Ascending aorta (tissue), 2 donors: ENCODE measurements at regions of chr3 and their contacts with region 1.

Region 1: GRCh38 chr3:150763122-150763841 is at the start of gene SIAH2:
- DNase-seq: peak; percentile 82 to 96
- H3K4me3 ChIP-seq: peak within 1 kb of the TSS; percentile 81 to 94
- H3K27ac ChIP-seq: peak within 1 kb of the TSS; percentile 92 to 97
- H3K4me1 ChIP-seq: peaks cover 0 to 23% of the 10 kb centered on the region in 2 donors
- H3K27me3 ChIP-seq: no peaks in the 10 kb centered on the region
- CTCF ChIP-seq: no peak
- total RNA-seq, gene SIAH2: 50.9 TPM

Region 2: GRCh38 chr3:150546226-150547044 is 216.8 kb before region 1 on chr3 and contains the starts of genes EIF2A and SERP1:
- intact Hi-C with region 1: loop called (anchors 1 kb)
- DNase-seq: peak; percentile 94 to 99
- H3K4me3 ChIP-seq: peak within 1 kb of the TSS; percentile 89 to 99
- H3K27ac ChIP-seq: peak within 1 kb of the TSS; percentile 99 to 100
- H3K4me1 ChIP-seq: peaks cover 0 to 24% of the 10 kb centered on the region in 2 donors
- H3K27me3 ChIP-seq: no peaks in the 10 kb centered on the region
- CTCF ChIP-seq: no peak
- total RNA-seq, gene EIF2A: 83.2 TPM
- total RNA-seq, gene SERP1: 237 TPM

Region 3: GRCh38 chr3:150603153-150603979 is 159.9 kb before region 1 on chr3 and contains the start of gene SELENOT:
- intact Hi-C with region 1: loop called (anchors 2 kb)
- DNase-seq: peak; percentile 84 to 97
- H3K4me3 ChIP-seq: peak within 1 kb of the TSS; percentile 80 to 83
- H3K27ac ChIP-seq: peak within 1 kb of the TSS; percentile 95 to 96
- H3K4me1 ChIP-seq: peaks cover 8 to 21% of the 10 kb centered on the region in 2 donors
- H3K27me3 ChIP-seq: no peaks in the 10 kb centered on the region
- CTCF ChIP-seq: peak in 1 of 3 experiments; percentile 30
- total RNA-seq, gene SELENOT: 112 TPM

Region 4: DNA sequence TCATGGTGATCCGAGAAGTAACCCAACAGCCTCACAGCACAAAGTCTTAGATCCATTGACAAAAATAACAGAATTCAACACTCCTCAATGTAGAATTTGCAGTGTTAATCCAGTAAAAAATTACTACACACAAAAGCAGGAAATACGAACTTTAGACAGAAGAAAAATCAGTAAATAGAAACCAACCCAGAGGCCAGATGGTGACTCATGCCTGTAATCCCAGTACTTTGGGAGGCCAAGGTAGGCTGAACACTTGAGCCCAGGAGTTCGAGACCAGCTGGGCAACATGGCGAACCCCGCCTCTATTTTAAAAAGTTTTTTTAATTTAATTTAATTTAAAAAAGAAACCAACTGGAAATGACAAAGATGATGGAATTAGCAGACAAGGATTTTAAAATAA is 124.0 kb before region 1 on chr3:
- intact Hi-C with region 1: no loop called
- DNase-seq: no peak
- H3K4me3 ChIP-seq: no peak overlapping the region
- H3K27ac ChIP-seq: no peak overlapping the region
- H3K4me1 ChIP-seq: no peaks in the 10 kb centered on the region
- H3K27me3 ChIP-seq: no peaks in the 10 kb centered on the region
- CTCF ChIP-seq: no peak

Region 5: GRCh38 chr3:150703299-150704134 is 59.8 kb before region 1 on chr3 and contains the start of gene ERICH6:
- intact Hi-C with region 1: loop called (anchors 1 kb)
- DNase-seq: peak; percentile 67 to 96
- H3K4me3 ChIP-seq: peak within 1 kb of the TSS; percentile 70 to 84
- H3K27ac ChIP-seq: peak within 1 kb of the TSS; percentile 83 to 86
- H3K4me1 ChIP-seq: peaks cover 0 to 5% of the 10 kb centered on the region in 2 donors
- H3K27me3 ChIP-seq: no peaks in the 10 kb centered on the region
- CTCF ChIP-seq: peak in 2 of 3 experiments; percentile 7 to 24
- total RNA-seq, gene ERICH6: not detected